Activated B cell treated with CpG ODN at 0.5 μM for 24 hours (primary cell): ENCODE measurements at regions of chr10 and their contacts with region 1.

Region 1: GRCh38 chr10:6416892-6417512 is 163.1 kb downstream of the PRKCQ start:
- DNase-seq: no peak
- ATAC-seq: peak; percentile 58
- H3K4me3 Mint-ChIP-seq: no peak overlapping the region
- H3K27ac Mint-ChIP-seq: no peak overlapping the region
- H3K4me1 Mint-ChIP-seq: no peaks in the 10 kb centered on the region
- H3K27me3 Mint-ChIP-seq: peaks cover 4% of the 10 kb centered on the region
- CTCF ChIP-seq: peak; percentile 25

Region 2: GRCh38 chr10:6232846-6233724 is 183.9 kb before region 1 on chr10:
- CTCF ChIA-PET with region 1: no interaction called
- POLR2A ChIA-PET with region 1: no interaction called
- intact Hi-C with region 1: no loop called
- DNase-seq: no peak
- ATAC-seq: no peak
- H3K4me3 Mint-ChIP-seq: no peak overlapping the region
- H3K27ac Mint-ChIP-seq: no peak overlapping the region
- H3K4me1 Mint-ChIP-seq: no peaks in the 10 kb centered on the region
- H3K27me3 Mint-ChIP-seq: no peaks in the 10 kb centered on the region
- CTCF ChIP-seq: no peak

Region 3: GRCh38 chr10:6580279-6581029 is 163.5 kb after region 1 on chr10:
- CTCF ChIA-PET with region 1: no interaction called
- POLR2A ChIA-PET with region 1: no interaction called
- intact Hi-C with region 1: loop called (anchors 1 kb)
- DNase-seq: peak; percentile 75
- ATAC-seq: peak; percentile 93
- H3K4me3 Mint-ChIP-seq: peak overlapping the region; percentile 83
- H3K27ac Mint-ChIP-seq: no peak overlapping the region
- H3K4me1 Mint-ChIP-seq: peaks cover 5% of the 10 kb centered on the region
- H3K27me3 Mint-ChIP-seq: peaks cover 39% of the 10 kb centered on the region
- CTCF ChIP-seq: no peak

Region 4: GRCh38 chr10:6667679-6668270 is 250.8 kb after region 1 on chr10:
- CTCF ChIA-PET with region 1: interaction called, 4 read pairs
- POLR2A ChIA-PET with region 1: no interaction called
- intact Hi-C with region 1: loop called (anchors 1 kb)
- DNase-seq: no peak
- ATAC-seq: no peak
- H3K4me3 Mint-ChIP-seq: no peak overlapping the region
- H3K27ac Mint-ChIP-seq: no peak overlapping the region
- H3K4me1 Mint-ChIP-seq: no peaks in the 10 kb centered on the region
- H3K27me3 Mint-ChIP-seq: peaks cover 8% of the 10 kb centered on the region
- CTCF ChIP-seq: no peak

Region 5: GRCh38 chr10:7111561-7111960 is 694.6 kb after region 1 on chr10:
- CTCF ChIA-PET with region 1: no interaction called
- POLR2A ChIA-PET with region 1: no interaction called
- intact Hi-C with region 1: loop called (anchors 10 kb)
- DNase-seq: no peak
- ATAC-seq: no peak
- H3K4me3 Mint-ChIP-seq: no peak overlapping the region
- H3K27ac Mint-ChIP-seq: no peak overlapping the region
- H3K4me1 Mint-ChIP-seq: no peaks in the 10 kb centered on the region
- H3K27me3 Mint-ChIP-seq: peaks cover 12% of the 10 kb centered on the region
- CTCF ChIP-seq: no peak